ENCODE measurements at regions of chr16 and their contacts with region 1.

Region 1: GRCh38 chr16:66977341-66978113 is 10.9 kb upstream of the CES4A start:
- DNase-seq: peak; percentile 56 to 98
- H3K4me3 ChIP-seq: no peak overlapping the region
- H3K27ac ChIP-seq: no peak overlapping the region
- H3K4me1 ChIP-seq: no peaks in the 10 kb centered on the region; a peak in 1 of 7 replicates
- H3K27me3 ChIP-seq: no peaks in the 10 kb centered on the region
- CTCF ChIP-seq: peak; percentile 94 to 98 (median 97)
- EP300 ChIP-seq: no peak
- POLR2A ChIP-seq: no peak
- RAD21 ChIP-seq: peak; percentile 99 to 100

Region 2: GRCh38 chr16:66937725-66938337 is 39.7 kb before region 1 on chr16:
- CTCF ChIA-PET with region 1: no interaction called
- POLR2A ChIA-PET with region 1: no interaction called
- DNase-seq: no peak
- H3K4me3 ChIP-seq: no peak overlapping the region
- H3K27ac ChIP-seq: no peak overlapping the region
- H3K4me1 ChIP-seq: peaks cover 0 to 9% (median 5%) of the 10 kb centered on the region in 4 experiments; a peak in 4 of 7 replicates
- H3K27me3 ChIP-seq: peaks cover 0 to 9% (median 6%) of the 10 kb centered on the region in 4 experiments; a peak in 4 of 7 replicates
- CTCF ChIP-seq: no peak
- EP300 ChIP-seq: no peak
- POLR2A ChIP-seq: no peak
- RAD21 ChIP-seq: no peak

Region 3: DNA sequence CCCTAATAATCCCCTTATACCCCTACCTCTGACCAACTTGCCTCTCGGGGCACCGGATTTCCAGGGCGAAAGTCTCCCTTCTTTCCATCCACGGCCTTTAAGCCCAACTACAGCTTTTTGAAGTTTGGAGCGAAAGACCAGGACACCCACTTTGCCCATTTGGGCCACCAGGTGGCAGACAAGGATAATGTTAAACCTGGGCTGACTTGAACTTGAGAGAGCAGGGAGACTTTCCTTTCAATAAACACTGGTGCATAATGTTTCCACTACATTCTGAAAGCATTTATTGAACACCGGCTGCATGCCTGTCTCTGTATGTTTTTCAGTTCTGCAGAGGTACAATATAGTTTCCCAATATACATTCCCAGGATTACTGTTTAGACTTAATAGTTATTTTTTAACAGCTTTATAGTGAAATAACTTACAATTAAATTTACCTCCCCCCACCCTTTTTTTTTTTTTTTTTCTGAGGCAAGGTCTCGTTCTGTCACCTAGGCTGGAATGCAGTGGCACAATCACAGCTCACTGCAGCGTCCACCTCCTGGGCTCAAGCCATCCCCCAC is 23.3 kb before region 1 on chr16:
- CTCF ChIA-PET with region 1: interaction called, 130 read pairs
- POLR2A ChIA-PET with region 1: no interaction called
- DNase-seq: peak; percentile 38 to 88
- H3K4me3 ChIP-seq: no peak overlapping the region
- H3K27ac ChIP-seq: no peak overlapping the region
- H3K4me1 ChIP-seq: no peaks in the 10 kb centered on the region
- H3K27me3 ChIP-seq: peaks cover 0 to 14% (median 13%) of the 10 kb centered on the region in 4 experiments; a peak in 6 of 7 replicates
- CTCF ChIP-seq: peak; percentile 71 to 84 (median 83)
- EP300 ChIP-seq: no peak
- POLR2A ChIP-seq: no peak
- RAD21 ChIP-seq: peak; percentile 88 to 90

Region 4: GRCh38 chr16:66988197-66988788 is 10.8 kb after region 1 on chr16 and contains the start of gene CES4A:
- CTCF ChIA-PET with region 1: interaction called, 49 read pairs
- POLR2A ChIA-PET with region 1: no interaction called
- DNase-seq: no peak
- H3K4me3 ChIP-seq: no peak within 1 kb of the TSS
- H3K27ac ChIP-seq: no peak within 1 kb of the TSS
- H3K4me1 ChIP-seq: no peaks in the 10 kb centered on the region
- H3K27me3 ChIP-seq: peaks cover 0 to 3% (median 2%) of the 10 kb centered on the region in 4 experiments; a peak in 3 of 7 replicates
- CTCF ChIP-seq: no peak
- EP300 ChIP-seq: no peak
- POLR2A ChIP-seq: no peak
- RAD21 ChIP-seq: no peak
- total RNA-seq, gene CES4A: 0.93 TPM in 1 of 2 replicates, not detected in the other

Region 5: DNA sequence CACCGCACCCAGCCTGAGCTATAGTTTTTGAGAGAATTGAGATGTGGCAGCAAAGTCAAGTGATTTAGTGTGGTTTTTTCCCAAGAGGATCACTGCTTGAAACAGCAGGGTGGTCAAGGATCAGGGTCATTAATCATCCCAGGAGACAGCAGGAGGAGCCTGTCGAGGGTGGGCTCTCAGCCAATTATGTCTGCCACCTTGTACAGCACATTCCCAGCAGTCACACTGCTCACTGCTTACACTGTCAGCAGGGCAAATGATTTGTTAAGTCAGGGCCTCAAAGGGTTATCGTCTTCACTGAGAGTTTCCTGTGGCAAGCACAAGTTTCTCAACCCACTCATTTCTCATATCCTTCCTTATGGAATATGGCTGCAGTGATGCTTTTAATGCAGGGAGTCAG is 160.1 kb after region 1 on chr16:
- CTCF ChIA-PET with region 1: interaction called, 25 read pairs
- POLR2A ChIA-PET with region 1: no interaction called
- DNase-seq: no peak
- H3K4me3 ChIP-seq: no peak overlapping the region
- H3K27ac ChIP-seq: no peak overlapping the region
- H3K4me1 ChIP-seq: no peaks in the 10 kb centered on the region
- H3K27me3 ChIP-seq: no peaks in the 10 kb centered on the region
- CTCF ChIP-seq: no peak
- EP300 ChIP-seq: no peak
- POLR2A ChIP-seq: no peak
- RAD21 ChIP-seq: no peak

Region 6: GRCh38 chr16:67159593-67160406 is 182.3 kb after region 1 on chr16 and contains the starts of genes FBXL8 and TRADD:
- CTCF ChIA-PET with region 1: interaction called, 20 read pairs
- POLR2A ChIA-PET with region 1: no interaction called
- DNase-seq: peak in 1 of 2 experiments; percentile 83
- H3K4me3 ChIP-seq: peak within 1 kb of the TSS; percentile 37 to 61 (median 46)
- H3K27ac ChIP-seq: no peak within 1 kb of the TSS
- H3K4me1 ChIP-seq: peaks cover 0 to 29% (median 20%) of the 10 kb centered on the region in 4 experiments; a peak in 6 of 7 replicates
- H3K27me3 ChIP-seq: peaks cover 93 to 100% (median 98%) of the 10 kb centered on the region in 4 experiments
- CTCF ChIP-seq: peak; percentile 20 to 46 (median 35); a peak in 3 of 4 replicates
- EP300 ChIP-seq: no peak
- POLR2A ChIP-seq: no peak
- RAD21 ChIP-seq: no peak; a peak in 1 of 4 replicates
- total RNA-seq, gene FBXL8: not detected in 2 replicates
- total RNA-seq, gene TRADD: 0.19 and 0.29 TPM in 2 replicates

Region 7: DNA sequence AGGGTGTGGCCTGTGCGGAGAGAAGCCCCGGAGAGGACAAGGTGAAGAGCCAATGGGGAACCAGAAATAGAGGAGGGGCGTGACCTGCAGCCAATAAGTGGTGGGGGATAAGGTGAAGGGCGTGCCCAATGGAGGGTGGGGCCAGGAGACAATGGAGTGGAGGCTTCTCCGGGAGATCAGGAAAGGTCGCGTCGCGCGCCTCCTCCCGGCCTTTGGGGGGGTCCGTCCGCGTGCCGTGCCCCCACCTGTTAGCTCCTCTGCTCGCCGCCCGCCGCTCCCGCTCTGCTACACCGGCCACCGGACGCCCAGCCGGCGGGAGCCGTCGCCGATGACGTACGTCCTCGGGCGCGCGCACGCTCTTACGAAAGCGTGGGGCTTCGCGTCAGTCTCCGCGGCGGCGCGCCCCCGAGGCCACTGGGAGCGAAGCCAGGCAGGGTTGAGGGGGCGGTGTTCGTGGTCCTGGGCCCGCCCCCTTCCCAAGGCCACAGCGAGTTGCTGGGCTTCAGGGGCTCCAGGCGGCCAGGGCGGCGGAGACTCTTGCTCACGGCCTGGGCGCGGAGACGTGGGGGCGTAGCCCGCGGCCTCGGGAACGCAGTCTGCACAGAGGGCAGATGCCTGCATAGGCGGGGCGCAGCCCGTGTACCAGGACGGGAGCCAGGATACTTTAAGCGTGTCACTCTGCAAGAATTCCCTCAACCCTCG is 206.3 kb after region 1 on chr16 and contains the start of gene MATCAP1:
- CTCF ChIA-PET with region 1: interaction called, 14 read pairs
- POLR2A ChIA-PET with region 1: no interaction called
- DNase-seq: peak; percentile 87 to 95
- H3K4me3 ChIP-seq: peak within 1 kb of the TSS; percentile 73 to 90 (median 85)
- H3K27ac ChIP-seq: peak within 1 kb of the TSS; percentile 98
- H3K4me1 ChIP-seq: peaks cover 0 to 19% (median 12%) of the 10 kb centered on the region in 4 experiments; a peak in 5 of 7 replicates
- H3K27me3 ChIP-seq: peaks cover 8 to 35% (median 21%) of the 10 kb centered on the region in 4 experiments
- CTCF ChIP-seq: no peak
- EP300 ChIP-seq: no peak
- POLR2A ChIP-seq: peak in 1 of 2 experiments; percentile 79; a peak in 2 of 3 replicates
- RAD21 ChIP-seq: no peak
- total RNA-seq, gene MATCAP1: 22.9 and 23.1 TPM in 2 replicates

Measured in H1 (cell line).